GM13976 (cell line): ENCODE measurements at regions of chr18 and their contacts with region 1.

Region 1: GRCh38 chr18:286515-287310 is 18.9 kb upstream of the THOC1 start:
- DNase-seq: no peak
- CTCF ChIP-seq: no peak

Region 2: DNA sequence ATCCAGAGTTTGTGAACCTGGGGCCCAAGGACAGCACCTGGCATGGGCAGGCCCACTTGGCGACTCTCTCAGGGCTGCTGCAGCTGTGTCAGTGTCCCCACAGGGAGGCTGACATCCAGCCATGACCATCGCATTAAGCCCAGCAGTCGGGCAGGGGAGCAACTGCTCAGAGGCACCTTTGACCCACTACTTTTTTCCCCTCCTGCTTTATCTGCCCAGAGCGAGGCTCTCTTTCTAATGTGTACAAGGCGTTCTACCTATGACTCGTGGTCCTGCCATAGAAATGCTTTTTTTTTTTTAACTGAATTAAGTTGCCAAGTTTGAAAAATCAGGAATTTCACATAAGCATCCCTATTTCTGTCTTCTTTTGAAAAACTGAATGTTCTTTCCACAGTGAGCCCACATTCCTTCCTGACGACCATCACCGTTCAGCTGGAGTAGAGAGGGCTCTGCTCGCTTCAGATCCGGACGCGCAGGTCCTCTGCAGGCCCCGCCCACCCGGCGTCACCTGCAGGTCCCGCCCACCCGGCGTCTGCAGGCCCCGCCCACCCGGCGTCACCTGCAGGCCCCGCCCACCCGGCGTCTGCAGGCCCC is 309.7 kb after region 1 on chr18:
- in situ Hi-C with region 1: no loop called
- DNase-seq: peak; percentile 71
- CTCF ChIP-seq: no peak

Region 3: DNA sequence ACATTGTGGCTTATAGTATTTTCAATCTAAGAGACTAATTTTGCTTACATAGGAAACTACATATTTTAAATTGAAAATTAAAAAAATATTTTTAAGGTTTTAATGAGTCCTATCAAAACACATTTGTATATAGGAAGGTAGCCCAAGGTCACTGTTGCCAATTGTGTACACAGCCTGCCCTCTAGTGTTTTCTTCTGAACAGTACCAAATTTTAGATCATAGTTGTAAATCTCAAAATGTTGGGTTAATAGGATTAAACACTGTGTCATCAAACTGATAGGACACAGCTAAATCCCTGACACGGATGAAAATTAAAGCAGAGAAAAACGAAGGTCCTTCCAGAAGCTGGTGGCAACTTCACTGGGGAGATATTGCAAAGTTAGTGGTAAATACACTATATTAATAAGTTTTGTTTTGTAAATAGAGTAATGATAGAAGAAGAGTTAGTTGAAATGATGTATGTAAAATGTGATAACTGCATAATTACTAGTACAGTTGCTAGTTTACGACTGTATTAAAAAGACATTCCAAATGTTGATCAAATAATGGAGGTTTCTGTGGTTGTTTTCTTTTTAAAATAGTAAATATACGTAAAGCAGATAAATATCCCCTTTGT is 329.8 kb after region 1 on chr18:
- in situ Hi-C with region 1: loop called (anchors 10 kb)
- DNase-seq: peak; percentile 41
- CTCF ChIP-seq: peak; percentile 40

Region 4: DNA sequence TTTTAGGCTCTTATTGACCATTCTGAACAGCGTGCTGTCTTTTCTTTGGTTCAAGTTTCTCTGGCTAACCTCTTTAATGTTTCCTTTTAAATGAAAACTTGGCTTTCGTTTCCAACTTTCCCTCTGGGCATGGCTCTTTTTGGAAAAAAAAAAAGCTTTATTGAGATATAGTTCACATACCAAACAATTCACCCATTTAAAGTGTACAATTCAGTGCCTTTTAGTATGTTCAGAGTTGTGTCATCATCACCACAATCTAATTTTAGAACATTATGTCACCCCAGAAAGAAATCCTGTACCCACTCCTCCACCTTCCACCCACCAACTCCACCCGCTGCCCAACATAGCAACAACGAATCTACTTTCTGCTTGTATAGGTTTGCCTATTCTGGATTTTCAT is 940.3 kb after region 1 on chr18:
- in situ Hi-C with region 1: no loop called
- DNase-seq: no peak
- CTCF ChIP-seq: no peak